ENCODE measurements at regions of chr17 and their contacts with region 1.

Region 1: GRCh38 chr17:33674685-33675084 is 381.6 kb upstream of the ASIC2 start:
- DNase-seq: peak in 2 of 3 donors; percentile 42 to 78
- ATAC-seq: peak; percentile 85 to 90
- H3K4me3 ChIP-seq: no peak overlapping the region
- H3K27ac ChIP-seq: no peak overlapping the region
- H3K4me1 ChIP-seq: no peaks in the 10 kb centered on the region
- H3K27me3 ChIP-seq: no peaks in the 10 kb centered on the region

Region 2: DNA sequence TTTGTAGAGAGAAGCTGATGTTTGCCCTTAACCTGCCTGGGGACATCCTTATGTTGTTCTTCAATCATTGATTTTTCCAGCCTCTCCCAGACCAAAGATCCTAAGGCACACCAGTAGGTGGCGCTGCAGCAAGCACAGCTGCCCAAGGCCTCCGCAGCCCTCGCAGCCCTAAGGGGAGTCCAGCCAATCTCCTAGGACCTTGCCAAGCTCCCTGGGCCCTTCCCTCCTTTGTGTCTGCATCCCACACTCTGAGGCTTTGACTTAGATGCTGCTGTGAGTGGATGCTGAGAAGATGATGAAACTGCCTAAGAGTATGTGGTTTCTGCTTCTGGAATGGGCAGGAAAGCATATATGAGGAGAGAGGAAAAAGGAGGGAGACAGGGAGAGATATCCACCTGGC is 635.9 kb before region 1 on chr17:
- intact Hi-C with region 1: loop called in 2 of 4 experiments (anchors 10 kb)
- DNase-seq: peak; percentile 36 to 69 (median 69)
- ATAC-seq: peak in 1 of 2 donors; percentile 86
- H3K4me3 ChIP-seq: no peak overlapping the region
- H3K27ac ChIP-seq: no peak overlapping the region
- H3K4me1 ChIP-seq: peaks cover 3% of the 10 kb centered on the region
- H3K27me3 ChIP-seq: no peaks in the 10 kb centered on the region

Region 3: GRCh38 chr17:33520426-33521330 is 154.0 kb before region 1 on chr17:
- intact Hi-C with region 1: loop called in 3 of 4 experiments (anchors 5 to 10 kb)
- DNase-seq: peak; percentile 30 to 75 (median 66)
- ATAC-seq: peak in 1 of 2 donors; percentile 70
- H3K4me3 ChIP-seq: no peak overlapping the region
- H3K27ac ChIP-seq: no peak overlapping the region
- H3K4me1 ChIP-seq: no peaks in the 10 kb centered on the region
- H3K27me3 ChIP-seq: no peaks in the 10 kb centered on the region

Measured in right cardiac atrium (tissue), 5 donors.